ENCODE measurements at regions of chr5 and their contacts with region 1.

Region 1: GRCh38 chr5:43061352-43062075 is 21.4 kb upstream of the ANXA2R start:
- DNase-seq: no peak
- ATAC-seq: no peak
- H3K4me3 ChIP-seq: no peak overlapping the region
- H3K4me3 Mint-ChIP-seq: no peak overlapping the region
- H3K27ac ChIP-seq: no peak overlapping the region
- H3K27ac Mint-ChIP-seq: peak overlapping the region in 8 of 9 donors; percentile 0 to 85 (median 68)
- H3K4me1 ChIP-seq: peaks cover 0 to 8% of the 10 kb centered on the region in 2 donors
- H3K4me1 Mint-ChIP-seq: peaks cover 0 to 29% (median 14%) of the 10 kb centered on the region in 7 donors
- H3K27me3 ChIP-seq: no peaks in the 10 kb centered on the region
- H3K27me3 Mint-ChIP-seq: no peaks in the 10 kb centered on the region

Region 2: DNA sequence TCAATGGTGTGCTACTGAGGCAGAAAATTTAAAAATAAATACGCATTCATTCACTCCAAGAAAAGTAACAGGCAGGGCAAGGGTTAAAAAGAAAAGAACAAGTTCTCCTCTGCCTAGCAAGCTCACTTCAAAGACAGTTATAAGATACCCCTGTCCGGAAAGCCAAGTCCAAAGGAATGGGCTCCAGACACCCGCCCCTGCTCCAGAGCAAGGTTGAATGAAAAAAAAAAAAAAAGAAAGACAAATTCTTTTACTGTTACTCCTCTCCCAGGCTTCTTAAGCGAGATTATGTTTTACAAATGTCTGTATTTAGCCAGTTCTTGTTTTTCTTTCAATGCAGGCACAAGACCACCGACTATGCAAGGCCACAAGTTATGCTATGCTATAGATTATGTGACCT is 12.3 kb before region 1 on chr5:
- CTCF ChIA-PET with region 1: interaction called, 6 read pairs
- POLR2A ChIA-PET with region 1: interaction called, 595 read pairs
- intact Hi-C with region 1: loop called in 1 of 2 experiments (anchors 1 kb)
- DNase-seq: no peak
- ATAC-seq: no peak
- H3K4me3 ChIP-seq: no peak overlapping the region
- H3K4me3 Mint-ChIP-seq: no peak overlapping the region
- H3K27ac ChIP-seq: no peak overlapping the region
- H3K27ac Mint-ChIP-seq: peak overlapping the region in 1 of 9 donors; percentile 45
- H3K4me1 ChIP-seq: peaks cover 5 to 7% of the 10 kb centered on the region in 2 donors
- H3K4me1 Mint-ChIP-seq: peaks cover 9 to 40% (median 31%) of the 10 kb centered on the region in 7 donors
- H3K27me3 ChIP-seq: no peaks in the 10 kb centered on the region
- H3K27me3 Mint-ChIP-seq: no peaks in the 10 kb centered on the region